ENCODE measurements at regions of chr7 and their contacts with region 1.

Region 1: DNA sequence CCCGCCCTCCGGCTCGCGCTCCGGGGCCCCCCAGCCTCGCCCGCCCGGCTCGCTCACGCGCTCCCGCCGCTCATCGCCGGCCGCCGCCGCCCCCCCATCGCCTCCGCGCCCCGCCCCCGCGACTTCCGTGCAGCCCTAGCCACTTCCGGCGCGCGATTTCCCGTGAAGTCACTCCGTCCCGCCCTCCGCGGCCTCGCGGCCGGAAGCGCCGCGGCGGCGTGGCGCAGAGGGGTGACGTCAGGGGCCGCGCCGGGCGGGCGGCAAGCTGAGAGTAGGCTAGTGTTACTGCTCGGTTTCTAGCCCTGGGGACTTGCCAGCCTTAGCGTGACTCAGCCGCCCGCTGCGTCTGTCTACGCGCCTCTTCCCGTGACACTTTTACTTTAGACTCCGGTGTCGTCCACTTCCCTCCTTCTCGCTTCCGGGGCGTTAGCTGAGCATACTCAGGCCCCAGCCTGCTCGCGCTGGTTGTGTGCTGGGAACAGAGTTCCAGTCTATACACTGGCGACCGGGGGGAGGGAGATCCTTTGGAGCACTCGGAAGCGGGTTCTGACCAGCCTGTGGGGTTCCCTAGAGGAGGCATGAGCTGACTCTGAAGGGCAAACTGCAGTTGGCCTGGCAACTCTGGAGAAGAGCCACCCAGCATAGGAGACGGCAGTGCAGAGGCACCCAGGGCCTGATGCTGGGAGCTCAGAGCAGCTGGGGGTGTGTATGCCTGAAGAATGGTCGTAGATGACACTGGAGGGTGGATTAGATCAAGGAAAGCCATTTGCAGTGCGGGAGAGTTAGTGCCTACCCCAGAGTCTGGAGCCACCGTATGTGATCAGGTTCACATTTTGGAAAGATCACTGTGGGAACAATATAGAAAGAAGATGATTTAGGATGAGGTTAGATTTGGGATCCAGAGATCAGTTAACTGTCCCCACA is at the start of gene PURB:
- DNase-seq: peak; percentile 97 to 99 (median 97)
- ATAC-seq: peak; percentile 92
- H3K4me3 ChIP-seq: peak within 1 kb of the TSS; percentile 88
- H3K4me3 Mint-ChIP-seq: peak within 1 kb of the TSS; percentile 92 to 97 (median 93)
- H3K27ac ChIP-seq: peak within 1 kb of the TSS; percentile 99
- H3K27ac Mint-ChIP-seq: peak within 1 kb of the TSS; percentile 98 to 100 (median 99)
- H3K4me1 ChIP-seq: peaks cover 26 to 50% of the 10 kb centered on the region in 2 donors
- H3K4me1 Mint-ChIP-seq: peaks cover 7 to 61% (median 46%) of the 10 kb centered on the region in 7 donors
- H3K27me3 ChIP-seq: no peaks in the 10 kb centered on the region
- H3K27me3 Mint-ChIP-seq: peaks cover 0 to 2% (median 0%) of the 10 kb centered on the region in 5 donors
- total RNA-seq, gene PURB: 16.5 to 30.5 (median 23.3) TPM

Region 2: GRCh38 chr7:44123190-44124003 is 762.3 kb before region 1 on chr7 and contains the start of gene POLD2:
- CTCF ChIA-PET with region 1: no interaction called
- POLR2A ChIA-PET with region 1: no interaction called
- intact Hi-C with region 1: no loop called
- DNase-seq: peak; percentile 88 to 99 (median 94)
- ATAC-seq: peak; percentile 99
- H3K4me3 ChIP-seq: peak within 1 kb of the TSS; percentile 89
- H3K4me3 Mint-ChIP-seq: peak within 1 kb of the TSS; percentile 82 to 97 (median 93)
- H3K27ac ChIP-seq: peak within 1 kb of the TSS; percentile 74
- H3K27ac Mint-ChIP-seq: peak within 1 kb of the TSS; percentile 40 to 96 (median 87)
- H3K4me1 ChIP-seq: peaks cover 8 to 9% of the 10 kb centered on the region in 2 donors
- H3K4me1 Mint-ChIP-seq: peaks cover 18 to 40% (median 39%) of the 10 kb centered on the region in 7 donors
- H3K27me3 ChIP-seq: no peaks in the 10 kb centered on the region
- H3K27me3 Mint-ChIP-seq: peaks cover 0 to 23% (median 0%) of the 10 kb centered on the region in 5 donors
- total RNA-seq, gene POLD2: 55.1 to 118 (median 69.2) TPM

Region 3: DNA sequence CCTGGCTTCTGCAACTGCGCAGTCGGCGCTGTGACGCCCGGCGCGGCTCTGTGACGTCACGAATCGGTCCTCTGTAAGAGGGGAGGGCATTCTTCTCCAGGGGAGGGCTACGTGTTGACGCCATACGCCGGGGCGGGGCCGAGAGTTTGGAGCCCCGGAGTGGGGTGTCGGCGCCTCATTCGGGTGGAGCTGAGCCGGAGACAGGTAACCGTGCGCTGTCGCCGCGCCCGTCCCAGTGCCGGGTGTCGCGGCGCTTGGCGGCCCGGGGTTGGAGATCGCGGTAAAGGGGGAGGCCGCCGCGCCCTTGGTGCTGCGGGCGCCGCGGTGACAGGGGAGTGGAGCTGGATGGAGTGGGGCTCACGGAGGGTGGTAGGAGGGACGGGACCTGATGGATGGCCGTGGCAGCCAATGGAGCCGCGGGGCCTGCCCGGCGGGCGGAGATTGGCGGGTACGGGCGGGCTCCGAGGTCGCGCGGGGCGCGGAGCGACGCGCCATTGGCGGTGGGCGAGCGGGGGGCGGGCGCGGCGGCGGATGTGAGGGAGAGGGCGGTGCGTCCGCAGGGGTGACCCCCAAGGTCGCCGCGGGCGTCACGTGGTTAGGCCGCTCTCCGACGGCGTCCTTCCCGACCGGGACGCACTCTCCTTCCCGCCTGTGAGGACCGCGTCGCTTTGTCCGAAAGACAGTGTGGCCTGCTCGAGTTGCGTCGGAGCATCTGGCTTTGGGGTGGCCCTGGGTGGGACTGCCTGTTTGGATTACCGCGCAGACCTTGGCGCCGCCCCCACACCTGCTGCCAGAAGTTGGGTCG is 279.0 kb before region 1 on chr7 and contains the start of gene OGDH:
- CTCF ChIA-PET with region 1: no interaction called
- POLR2A ChIA-PET with region 1: interaction called, 22 read pairs
- intact Hi-C with region 1: loop called (anchors 1 kb)
- DNase-seq: peak; percentile 99 to 100 (median 100)
- ATAC-seq: peak; percentile 95
- H3K4me3 ChIP-seq: peak within 1 kb of the TSS; percentile 71
- H3K4me3 Mint-ChIP-seq: peak within 1 kb of the TSS; percentile 81 to 99 (median 98)
- H3K27ac ChIP-seq: peak within 1 kb of the TSS; percentile 93
- H3K27ac Mint-ChIP-seq: peak within 1 kb of the TSS; percentile 93 to 100 (median 98)
- H3K4me1 ChIP-seq: peaks cover 13 to 17% of the 10 kb centered on the region in 2 donors
- H3K4me1 Mint-ChIP-seq: peaks cover 0 to 45% (median 37%) of the 10 kb centered on the region in 7 donors
- H3K27me3 ChIP-seq: no peaks in the 10 kb centered on the region
- H3K27me3 Mint-ChIP-seq: peaks cover 0 to 20% (median 0%) of the 10 kb centered on the region in 5 donors
- total RNA-seq, gene OGDH: 43.1 to 122 (median 66.3) TPM

Region 4: GRCh38 chr7:44858161-44858560 is 27.5 kb before region 1 on chr7:
- CTCF ChIA-PET with region 1: interaction called, 5 read pairs
- POLR2A ChIA-PET with region 1: interaction called, 19 read pairs
- intact Hi-C with region 1: loop called (anchors 1 to 2 kb)
- DNase-seq: no peak
- ATAC-seq: no peak
- H3K4me3 ChIP-seq: no peak overlapping the region
- H3K4me3 Mint-ChIP-seq: no peak overlapping the region
- H3K27ac ChIP-seq: no peak overlapping the region
- H3K27ac Mint-ChIP-seq: peak overlapping the region in 1 of 9 donors; percentile 9
- H3K4me1 ChIP-seq: peaks cover 0 to 4% of the 10 kb centered on the region in 2 donors
- H3K4me1 Mint-ChIP-seq: peaks cover 0 to 21% (median 5%) of the 10 kb centered on the region in 7 donors
- H3K27me3 ChIP-seq: no peaks in the 10 kb centered on the region
- H3K27me3 Mint-ChIP-seq: peaks cover 0 to 6% (median 0%) of the 10 kb centered on the region in 5 donors

Region 5: GRCh38 chr7:44921607-44922359 is 36.1 kb after region 1 on chr7:
- CTCF ChIA-PET with region 1: interaction called, 4 read pairs
- POLR2A ChIA-PET with region 1: interaction called, 3 read pairs
- intact Hi-C with region 1: loop called (anchors 2 kb)
- DNase-seq: peak; percentile 76 to 98 (median 86)
- ATAC-seq: peak; percentile 99
- H3K4me3 ChIP-seq: no peak overlapping the region
- H3K4me3 Mint-ChIP-seq: no peak overlapping the region
- H3K27ac ChIP-seq: no peak overlapping the region
- H3K27ac Mint-ChIP-seq: peak overlapping the region in 5 of 9 donors; percentile 6 to 78 (median 34)
- H3K4me1 ChIP-seq: peaks cover 0 to 9% of the 10 kb centered on the region in 2 donors
- H3K4me1 Mint-ChIP-seq: peaks cover 0 to 21% (median 0%) of the 10 kb centered on the region in 7 donors
- H3K27me3 ChIP-seq: no peaks in the 10 kb centered on the region
- H3K27me3 Mint-ChIP-seq: peaks cover 0 to 6% (median 0%) of the 10 kb centered on the region in 5 donors

Region 6: DNA sequence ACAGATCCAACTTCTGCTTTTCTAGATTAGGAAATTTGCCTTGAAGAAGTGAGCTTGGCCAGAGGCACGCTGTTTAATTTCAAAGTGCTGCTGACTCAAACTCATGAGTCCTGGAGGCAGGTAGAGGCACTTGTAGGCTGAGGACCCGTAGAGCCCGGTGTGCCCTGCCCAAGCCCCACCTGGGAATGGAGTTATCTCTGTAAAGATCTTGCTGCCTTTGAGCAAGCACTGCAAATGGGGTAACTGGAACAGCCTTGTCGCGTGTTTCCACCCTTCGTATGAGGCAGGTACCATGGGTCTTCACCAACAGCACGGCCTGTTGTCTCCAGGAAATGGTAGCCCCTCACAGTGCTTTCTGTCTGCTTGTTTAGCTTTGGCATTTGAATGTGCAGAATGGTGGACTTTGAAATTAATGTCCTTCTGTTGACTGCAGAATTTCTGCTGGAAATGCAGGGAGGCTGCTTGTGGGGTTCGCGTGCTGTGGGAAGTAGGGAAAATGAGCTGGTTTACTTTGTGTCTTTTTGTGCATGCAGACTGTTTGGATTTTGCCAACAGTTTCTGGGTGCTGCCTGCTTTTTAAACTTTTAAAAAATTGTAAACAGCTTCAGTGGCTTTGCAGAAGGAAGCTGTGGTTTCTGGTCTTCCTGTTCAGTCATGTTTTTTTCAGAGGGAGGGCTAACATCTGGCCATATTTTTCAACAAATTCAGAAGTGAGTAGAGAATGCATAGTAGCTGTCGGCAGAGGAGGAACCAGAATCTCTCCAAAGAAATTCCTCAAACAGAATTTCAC is 141.5 kb after region 1 on chr7:
- CTCF ChIA-PET with region 1: no interaction called
- POLR2A ChIA-PET with region 1: interaction called, 12 read pairs
- intact Hi-C with region 1: no loop called
- DNase-seq: peak in 7 of 9 donors; percentile 42 to 79 (median 71)
- ATAC-seq: peak; percentile 81
- H3K4me3 ChIP-seq: peak overlapping the region; percentile 87
- H3K4me3 Mint-ChIP-seq: peak overlapping the region; percentile 89 to 98 (median 95)
- H3K27ac ChIP-seq: peak overlapping the region; percentile 86
- H3K27ac Mint-ChIP-seq: peak overlapping the region; percentile 80 to 97 (median 93)
- H3K4me1 ChIP-seq: peaks cover 34 to 57% of the 10 kb centered on the region in 2 donors
- H3K4me1 Mint-ChIP-seq: peaks cover 44 to 70% (median 62%) of the 10 kb centered on the region in 7 donors
- H3K27me3 ChIP-seq: no peaks in the 10 kb centered on the region
- H3K27me3 Mint-ChIP-seq: no peaks in the 10 kb centered on the region

Region 7: GRCh38 chr7:45082031-45082830 is 196.6 kb after region 1 on chr7:
- CTCF ChIA-PET with region 1: no interaction called
- POLR2A ChIA-PET with region 1: no interaction called
- intact Hi-C with region 1: no loop called
- DNase-seq: no peak
- ATAC-seq: no peak
- H3K4me3 ChIP-seq: no peak overlapping the region
- H3K4me3 Mint-ChIP-seq: no peak overlapping the region
- H3K27ac ChIP-seq: no peak overlapping the region
- H3K27ac Mint-ChIP-seq: no peak overlapping the region
- H3K4me1 ChIP-seq: no peaks in the 10 kb centered on the region
- H3K4me1 Mint-ChIP-seq: peaks cover 0 to 16% (median 3%) of the 10 kb centered on the region in 7 donors
- H3K27me3 ChIP-seq: no peaks in the 10 kb centered on the region
- H3K27me3 Mint-ChIP-seq: peaks cover 0 to 2% (median 0%) of the 10 kb centered on the region in 5 donors